Activated CD8-positive, alpha-beta T cell treated with anti-CD3 and anti-CD28 coated beads for 36 hours (primary cell): ENCODE measurements at regions of chr11 and their contacts with region 1.

Region 1: GRCh38 chr11:6619004-6619745 is at the start of gene TPP1:
- DNase-seq: peak; percentile 96
- ATAC-seq: peak; percentile 98
- H3K4me3 Mint-ChIP-seq: no peak within 1 kb of the TSS
- H3K27ac Mint-ChIP-seq: no peak within 1 kb of the TSS
- H3K4me1 Mint-ChIP-seq: peaks cover 3% of the 10 kb centered on the region
- H3K27me3 Mint-ChIP-seq: no peaks in the 10 kb centered on the region
- CTCF ChIP-seq: no peak
- total RNA-seq, gene TPP1: 28.1 to 31.4 TPM

Region 2: DNA sequence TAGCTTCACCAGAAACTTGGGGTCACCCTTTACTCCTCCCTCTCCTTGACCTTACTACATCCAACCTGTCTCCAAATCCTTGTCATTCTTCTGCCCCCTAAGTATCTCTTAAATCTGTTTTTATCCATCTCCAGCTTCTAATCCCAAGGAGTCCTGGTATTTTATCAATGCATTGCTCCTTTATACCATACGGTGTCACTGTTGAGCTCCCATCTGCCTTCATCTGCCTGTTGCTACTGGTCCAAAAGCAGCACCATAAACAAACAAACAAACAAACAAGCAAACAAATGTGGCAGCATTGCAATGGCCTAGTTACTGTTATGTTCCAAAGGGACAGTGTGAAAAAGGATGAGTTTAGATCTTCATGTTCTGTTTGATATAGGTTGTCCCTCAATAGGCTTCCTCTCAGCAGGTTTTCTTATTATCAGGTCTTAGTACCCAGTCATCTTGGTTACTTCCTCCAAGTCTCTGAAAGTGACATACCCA is 87.9 kb before region 1 on chr11:
- CTCF ChIA-PET with region 1: interaction called, 10 read pairs
- POLR2A ChIA-PET with region 1: no interaction called
- intact Hi-C with region 1: no loop called
- DNase-seq: peak; percentile 22
- ATAC-seq: peak; percentile 69
- H3K4me3 Mint-ChIP-seq: no peak overlapping the region
- H3K27ac Mint-ChIP-seq: no peak overlapping the region
- H3K4me1 Mint-ChIP-seq: peaks cover 12% of the 10 kb centered on the region
- H3K27me3 Mint-ChIP-seq: no peaks in the 10 kb centered on the region
- CTCF ChIP-seq: peak; percentile 81

Region 3: DNA sequence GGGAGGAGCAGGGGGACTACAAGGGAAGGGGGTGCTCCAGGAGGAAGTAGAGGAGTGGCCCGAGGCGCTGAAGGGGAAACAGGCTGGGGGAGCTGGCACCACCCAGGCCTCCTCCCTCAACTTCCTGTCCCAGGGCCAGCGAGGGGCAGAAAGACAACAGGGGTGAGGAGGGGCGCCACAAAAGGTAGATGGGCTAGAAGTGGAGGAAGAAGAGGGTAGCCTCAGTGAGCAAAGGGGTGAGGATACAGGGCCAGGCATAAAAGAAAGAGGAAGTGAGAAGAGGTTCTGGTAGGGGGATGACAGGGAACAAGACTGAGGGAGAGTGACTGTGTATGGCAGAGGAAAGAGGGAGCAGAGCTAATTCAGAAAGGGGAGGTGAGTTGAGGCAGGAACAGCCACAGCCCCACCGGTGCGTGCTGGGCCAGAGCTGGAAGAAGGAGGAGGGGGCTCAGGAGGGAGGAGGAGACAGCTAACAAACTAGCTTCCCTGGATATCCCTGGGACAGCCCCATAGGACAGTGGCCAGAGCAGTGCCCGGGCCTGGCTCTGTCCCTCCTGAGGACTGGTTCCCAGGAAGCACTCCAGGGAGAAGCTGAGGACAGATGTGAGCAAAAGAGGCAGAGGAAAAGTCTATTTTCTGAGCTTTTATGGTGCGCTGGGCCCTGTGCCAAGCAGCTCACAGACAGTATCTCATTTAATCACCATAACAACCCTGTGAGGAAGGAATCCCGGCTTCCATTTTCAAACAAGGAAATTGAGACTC is 27.9 kb after region 1 on chr11:
- CTCF ChIA-PET with region 1: interaction called, 5 read pairs
- POLR2A ChIA-PET with region 1: interaction called, 20 read pairs
- intact Hi-C with region 1: no loop called
- DNase-seq: peak; percentile 47
- ATAC-seq: peak; percentile 46
- H3K4me3 Mint-ChIP-seq: no peak overlapping the region
- H3K27ac Mint-ChIP-seq: no peak overlapping the region
- H3K4me1 Mint-ChIP-seq: no peaks in the 10 kb centered on the region
- H3K27me3 Mint-ChIP-seq: no peaks in the 10 kb centered on the region
- CTCF ChIP-seq: no peak

Region 4: GRCh38 chr11:6667733-6668374 is 48.7 kb after region 1 on chr11:
- CTCF ChIA-PET with region 1: interaction called, 23 read pairs
- POLR2A ChIA-PET with region 1: interaction called, 6 read pairs
- intact Hi-C with region 1: no loop called
- DNase-seq: peak; percentile 59
- ATAC-seq: peak; percentile 78
- H3K4me3 Mint-ChIP-seq: no peak overlapping the region
- H3K27ac Mint-ChIP-seq: peak overlapping the region; percentile 73
- H3K4me1 Mint-ChIP-seq: peaks cover 57% of the 10 kb centered on the region
- H3K27me3 Mint-ChIP-seq: no peaks in the 10 kb centered on the region
- CTCF ChIP-seq: peak; percentile 75

Region 5: GRCh38 chr11:6825231-6825744 is 206.1 kb after region 1 on chr11:
- CTCF ChIA-PET with region 1: no interaction called
- POLR2A ChIA-PET with region 1: no interaction called
- intact Hi-C with region 1: no loop called
- DNase-seq: no peak
- ATAC-seq: no peak
- H3K4me3 Mint-ChIP-seq: no peak overlapping the region
- H3K27ac Mint-ChIP-seq: no peak overlapping the region
- H3K4me1 Mint-ChIP-seq: no peaks in the 10 kb centered on the region
- H3K27me3 Mint-ChIP-seq: peaks cover 6% of the 10 kb centered on the region
- CTCF ChIP-seq: no peak